Activated CD4-positive, alpha-beta T cell treated with anti-CD3 and anti-CD28 coated beads, Interleukin-2, amount 10 ng/mL, durations not matched to agents 7 days and 5 days (primary cell): ENCODE measurements at regions of chr17 and their contacts with region 1.

Region 1: DNA sequence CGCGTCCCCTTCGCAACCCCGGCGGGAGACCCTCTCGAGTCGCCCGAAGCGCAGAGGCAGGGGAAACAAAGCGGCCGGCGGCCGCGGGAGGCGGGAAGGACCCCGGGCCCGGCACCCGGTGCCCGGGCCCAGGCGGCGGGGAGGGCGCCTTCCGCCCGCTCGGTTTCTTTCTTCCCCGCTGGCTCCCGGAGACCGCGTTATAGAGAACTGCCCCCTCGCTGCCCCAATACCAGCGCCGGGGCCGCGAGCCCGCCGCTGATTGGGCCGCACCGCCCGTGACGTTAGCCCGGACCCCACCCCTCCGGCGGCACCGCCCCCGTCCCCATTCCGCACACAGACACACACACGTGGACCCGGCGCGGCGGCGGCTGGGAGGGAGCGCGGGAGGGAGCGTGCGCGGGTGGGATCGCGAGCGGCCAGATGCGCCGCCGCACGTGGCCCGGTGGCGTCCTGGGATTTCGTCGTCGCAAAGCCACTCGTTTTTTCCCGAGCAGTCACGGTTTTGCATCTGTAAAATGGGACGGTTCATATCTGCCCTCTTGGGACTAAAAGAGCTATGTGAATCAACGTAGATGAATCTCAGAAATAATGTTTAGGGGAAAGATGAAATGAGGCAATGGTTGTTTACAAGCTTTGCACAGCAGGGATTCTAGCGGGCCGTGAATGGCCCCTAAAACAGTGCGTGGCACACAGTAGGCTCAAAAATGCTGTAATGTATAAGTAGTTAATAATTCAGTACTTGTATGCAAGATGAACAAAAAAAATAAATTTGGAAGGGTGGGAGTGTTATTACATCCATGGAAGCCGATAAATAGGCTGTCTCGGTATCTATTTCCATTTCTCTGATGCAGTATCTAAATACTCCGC is at the start of gene EPOP:
- DNase-seq: peak; percentile 90
- H3K4me3 Mint-ChIP-seq: peak within 1 kb of the TSS; percentile 55
- H3K27ac Mint-ChIP-seq: peak within 1 kb of the TSS; percentile 36
- H3K4me1 Mint-ChIP-seq: peaks cover 43% of the 10 kb centered on the region
- H3K27me3 Mint-ChIP-seq: peaks cover 28% of the 10 kb centered on the region
- total RNA-seq, gene EPOP: 7.5 to 7.8 TPM

Region 2: DNA sequence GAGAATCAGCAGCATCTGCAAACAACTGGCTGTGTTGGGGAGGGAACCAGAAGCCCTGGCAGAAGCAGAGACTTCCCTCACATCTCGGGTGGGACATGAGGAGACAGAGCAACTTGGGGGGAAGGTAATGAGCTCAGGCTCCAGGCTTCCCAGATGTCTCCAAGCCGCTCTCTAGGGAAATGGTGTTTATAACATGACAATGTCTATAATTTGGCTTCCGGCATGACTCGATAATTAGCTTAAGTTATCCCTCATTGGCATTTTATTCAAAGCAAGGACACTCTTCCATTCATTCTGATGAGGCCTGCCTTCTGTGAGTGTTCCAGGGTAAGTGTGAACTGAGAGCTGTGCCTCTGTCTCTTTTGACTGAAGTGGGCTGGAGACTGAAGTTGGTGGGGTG is 15.4 kb after region 1 on chr17:
- CTCF ChIA-PET with region 1: interaction called, 14 read pairs
- POLR2A ChIA-PET with region 1: no interaction called
- DNase-seq: no peak
- H3K4me3 Mint-ChIP-seq: no peak overlapping the region
- H3K27ac Mint-ChIP-seq: no peak overlapping the region
- H3K4me1 Mint-ChIP-seq: no peaks in the 10 kb centered on the region
- H3K27me3 Mint-ChIP-seq: peaks cover 5% of the 10 kb centered on the region

Region 3: DNA sequence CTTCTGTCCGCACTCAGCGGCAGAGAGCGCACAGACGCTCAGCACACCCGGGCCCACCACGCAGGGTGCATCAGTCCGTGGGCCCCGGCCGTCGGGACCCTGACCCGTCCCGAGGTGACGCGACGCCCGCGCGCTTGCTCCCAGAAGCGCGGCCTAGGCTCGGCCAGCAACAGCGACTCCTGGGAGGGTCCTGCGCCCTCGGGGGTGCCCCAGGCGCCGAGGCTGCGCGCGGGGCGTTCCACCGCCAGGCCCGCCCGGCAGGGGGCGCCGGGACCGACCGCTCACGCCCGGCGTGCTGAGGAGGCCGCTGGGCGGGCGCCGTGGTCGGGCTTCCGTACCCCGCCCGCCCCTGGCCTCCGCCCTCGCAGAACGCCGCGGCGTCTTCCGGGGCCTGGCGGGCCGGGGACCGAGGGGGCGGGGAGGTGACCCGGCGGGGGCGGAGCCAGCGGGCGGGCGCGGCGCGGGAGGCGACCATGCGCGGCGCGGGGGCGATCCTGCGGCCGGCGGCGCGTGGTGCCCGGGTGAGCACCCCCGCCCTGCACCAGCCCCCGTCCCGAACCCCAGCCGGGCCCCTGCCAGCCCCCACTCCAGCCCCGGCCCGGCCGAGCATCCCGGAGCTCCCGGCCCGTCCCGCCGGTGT is 55.0 kb after region 1 on chr17 and contains the start of gene CISD3:
- CTCF ChIA-PET with region 1: interaction called, 57 read pairs
- POLR2A ChIA-PET with region 1: no interaction called
- DNase-seq: peak; percentile 85
- H3K4me3 Mint-ChIP-seq: peak within 1 kb of the TSS; percentile 97
- H3K27ac Mint-ChIP-seq: peak within 1 kb of the TSS; percentile 91
- H3K4me1 Mint-ChIP-seq: peaks cover 77% of the 10 kb centered on the region
- H3K27me3 Mint-ChIP-seq: no peaks in the 10 kb centered on the region
- total RNA-seq, gene CISD3: 45.7 to 46.3 TPM

Region 4: GRCh38 chr17:38735161-38735997 is 60.4 kb after region 1 on chr17:
- CTCF ChIA-PET with region 1: interaction called, 57 read pairs
- POLR2A ChIA-PET with region 1: no interaction called
- DNase-seq: peak; percentile 78
- H3K4me3 Mint-ChIP-seq: no peak overlapping the region
- H3K27ac Mint-ChIP-seq: no peak overlapping the region
- H3K4me1 Mint-ChIP-seq: peaks cover 38% of the 10 kb centered on the region
- H3K27me3 Mint-ChIP-seq: no peaks in the 10 kb centered on the region